ENCODE measurements at regions of chr5 and their contacts with region 1.

Region 1: DNA sequence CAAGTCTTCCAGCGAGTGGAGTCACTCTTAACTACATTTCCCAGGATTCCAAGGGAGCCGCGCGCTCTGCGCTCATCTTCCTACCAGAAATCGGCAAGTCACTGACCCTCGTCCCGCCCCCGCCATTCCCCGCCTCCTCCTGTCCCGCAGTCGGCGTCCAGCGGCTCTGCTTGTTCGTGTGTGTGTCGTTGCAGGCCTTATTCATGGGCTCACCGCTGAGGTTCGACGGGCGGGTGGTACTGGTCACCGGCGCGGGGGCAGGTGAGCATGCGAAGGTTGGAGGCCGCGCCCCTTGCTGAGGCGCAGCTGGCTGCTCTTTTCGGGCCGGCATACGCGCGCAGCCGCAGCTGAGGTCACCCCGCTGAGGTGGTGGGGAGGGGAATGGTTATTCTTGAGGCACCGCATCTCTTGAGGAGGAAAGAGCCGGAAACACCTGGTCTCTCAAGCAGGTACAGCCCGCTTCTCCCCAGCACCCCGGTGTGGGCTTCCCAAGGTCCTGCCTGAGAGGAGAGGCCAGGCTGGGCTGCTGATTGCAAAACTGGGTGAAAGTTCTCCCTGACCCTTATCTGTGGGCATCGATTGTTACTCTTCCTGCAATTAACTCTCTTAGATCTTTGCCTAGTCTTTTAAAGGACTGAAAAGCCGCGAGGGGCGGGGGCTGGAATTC is at the start of gene HSD17B4:
- DNase-seq: peak; percentile 77 to 85
- ATAC-seq: peak; percentile 97 to 98
- H3K4me3 ChIP-seq: peak within 1 kb of the TSS; percentile 71 to 93 (median 79)
- H3K27ac ChIP-seq: peak within 1 kb of the TSS; percentile 85 to 97 (median 87)
- H3K4me1 ChIP-seq: peaks cover 12 to 14% of the 10 kb centered on the region in 2 donors
- H3K27me3 ChIP-seq: no peaks in the 10 kb centered on the region
- CTCF ChIP-seq: no peak
- POLR2A ChIP-seq: peak; percentile 58 to 69
- total RNA-seq, gene HSD17B4: 60.9 to 200 (median 83.1) TPM

Region 2: DNA sequence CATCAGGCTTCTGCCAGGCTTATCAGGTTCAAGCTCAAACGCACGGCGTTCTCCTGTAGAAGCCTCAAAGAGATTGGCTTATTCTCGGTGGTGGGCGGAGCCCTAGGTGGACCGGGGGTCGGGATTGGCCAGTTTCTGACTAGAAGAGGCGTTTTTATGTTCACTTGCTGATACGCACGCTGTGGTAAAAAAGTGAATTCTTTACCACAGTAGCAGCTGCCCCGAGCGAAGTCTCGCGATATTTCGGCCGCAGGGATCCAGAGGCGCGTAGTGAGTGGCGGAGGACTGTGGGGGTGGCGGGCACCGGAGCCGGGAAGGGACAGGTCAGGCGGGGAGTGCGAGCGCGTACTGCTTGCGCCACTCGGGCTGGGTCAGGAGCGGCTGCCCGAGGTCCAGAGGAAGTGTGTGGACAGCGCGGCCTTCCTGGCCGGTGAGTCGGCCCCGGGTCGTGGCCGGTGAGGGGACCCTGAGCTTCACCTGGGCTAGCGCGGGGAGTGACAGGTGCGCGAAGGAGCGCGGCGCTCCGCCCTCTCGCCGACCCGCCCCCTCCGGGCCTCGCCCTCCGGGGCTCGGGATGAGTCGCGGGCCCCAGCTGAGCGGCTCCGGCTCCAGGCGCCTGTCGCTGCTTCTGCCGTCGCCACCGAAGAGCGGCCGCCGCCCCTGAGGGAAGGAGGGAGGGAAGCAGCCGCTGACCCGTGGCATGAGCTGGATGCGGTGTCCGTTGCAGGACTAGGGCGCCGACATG is 381.5 kb before region 1 on chr5 and contains the start of gene DMXL1:
- in situ Hi-C with region 1: no loop called
- intact Hi-C with region 1: loop called (anchors 1 kb)
- DNase-seq: peak; percentile 99
- ATAC-seq: peak; percentile 95 to 97
- H3K4me3 ChIP-seq: peak within 1 kb of the TSS; percentile 73 to 91 (median 88)
- H3K27ac ChIP-seq: peak within 1 kb of the TSS; percentile 91 to 99 (median 96)
- H3K4me1 ChIP-seq: peaks cover 21 to 32% of the 10 kb centered on the region in 2 donors
- H3K27me3 ChIP-seq: no peaks in the 10 kb centered on the region
- CTCF ChIP-seq: peak in 1 of 5 experiments; percentile 25
- POLR2A ChIP-seq: peak; percentile 76 to 83
- total RNA-seq, gene DMXL1: 17.8 to 31.1 (median 24.3) TPM

Region 3: DNA sequence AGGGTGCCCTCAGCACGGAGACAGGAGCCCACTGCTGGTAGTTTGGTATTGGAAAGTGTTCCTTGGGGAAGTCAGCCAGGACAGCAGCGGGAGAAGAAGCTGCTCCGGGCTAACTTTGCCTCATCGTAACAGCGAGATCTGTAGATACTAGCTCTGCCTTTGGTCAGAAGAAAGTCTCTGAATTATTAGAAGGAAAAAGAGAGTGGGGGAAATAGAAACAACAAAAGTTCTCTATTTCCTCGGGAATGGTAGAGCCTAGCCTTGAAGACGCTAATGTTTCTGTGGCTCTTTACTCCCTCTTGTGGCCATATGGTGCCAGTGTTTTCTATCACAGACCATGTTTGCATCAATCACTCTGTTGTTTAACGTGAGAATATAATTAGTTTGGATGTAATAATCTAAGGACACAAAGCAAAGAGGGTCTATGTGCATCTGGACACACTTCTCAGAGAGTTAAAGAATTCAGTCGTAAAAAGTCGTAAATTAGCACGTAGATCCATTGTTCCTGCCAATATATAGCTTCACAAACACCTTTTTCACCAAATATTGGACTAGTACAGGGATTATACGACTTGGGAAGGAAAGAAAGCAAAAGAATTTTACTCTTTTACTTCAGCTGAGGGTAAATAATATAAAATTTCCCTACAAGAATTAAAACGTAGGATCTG is 40.4 kb before region 1 on chr5:
- in situ Hi-C with region 1: no loop called
- intact Hi-C with region 1: no loop called
- DNase-seq: peak; percentile 7 to 29
- ATAC-seq: peak; percentile 91 to 99
- H3K4me3 ChIP-seq: peak overlapping the region; percentile 59 to 67 (median 62)
- H3K27ac ChIP-seq: peak overlapping the region in 2 of 4 donors; percentile 10 to 38
- H3K4me1 ChIP-seq: peaks cover 0 to 5% of the 10 kb centered on the region in 2 donors
- H3K27me3 ChIP-seq: no peaks in the 10 kb centered on the region
- CTCF ChIP-seq: peak; percentile 82 to 93 (median 83)
- POLR2A ChIP-seq: no peak

Measured in gastrocnemius medialis (tissue), 4 donors.